Calu3 (cell line): ENCODE measurements at regions of chr17 and their contacts with region 1.

Region 1: DNA sequence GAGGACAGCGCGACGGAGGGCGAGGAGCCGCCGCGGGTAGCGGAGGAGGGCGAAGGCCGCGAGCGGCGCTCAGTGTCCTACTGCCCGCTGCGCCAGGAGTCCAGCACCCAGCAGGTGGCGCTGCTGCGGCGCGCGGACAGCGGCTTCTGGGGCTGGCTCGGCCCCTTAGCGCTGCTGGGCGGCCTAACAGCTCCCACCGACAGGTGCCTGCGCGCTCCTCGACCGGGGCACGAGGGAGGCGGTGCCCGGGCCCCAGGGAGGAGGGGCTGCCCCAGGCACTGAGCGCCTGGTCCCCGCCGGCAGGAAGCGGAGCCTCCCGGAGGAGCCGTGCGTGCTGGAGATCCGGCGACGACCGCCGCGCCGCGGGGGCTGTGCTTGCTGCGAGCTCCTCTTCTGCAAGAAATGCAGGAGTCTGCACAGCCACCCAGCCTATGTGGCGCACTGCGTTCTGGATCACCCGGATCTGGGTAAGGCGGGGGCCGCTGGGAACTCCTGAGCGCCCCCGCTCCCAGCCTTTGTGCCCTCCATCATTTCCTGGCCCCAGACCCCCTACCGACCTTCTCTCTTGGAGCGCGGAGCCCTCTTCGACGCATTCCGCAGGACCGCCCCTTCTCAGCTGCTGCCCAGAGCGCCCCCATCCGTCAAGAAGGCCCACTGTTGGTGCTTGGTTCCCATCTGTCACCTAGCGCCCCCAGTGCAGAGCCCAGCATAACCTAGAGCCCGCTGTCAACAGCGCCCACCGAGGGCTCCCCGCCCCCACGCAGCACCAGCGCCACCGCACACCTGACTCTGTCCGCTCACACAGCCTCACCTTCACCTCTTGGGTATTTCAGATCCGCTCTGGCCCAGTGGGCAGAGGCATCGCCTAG is 3.7 kb downstream of the C17orf50 start:
- DNase-seq: peak; percentile 96
- H3K4me3 Mint-ChIP-seq: peak overlapping the region; percentile 93
- H3K27ac Mint-ChIP-seq: no peak overlapping the region
- H3K4me1 Mint-ChIP-seq: peaks cover 10% of the 10 kb centered on the region
- H3K27me3 Mint-ChIP-seq: peaks cover 42% of the 10 kb centered on the region
- CTCF ChIP-seq: peak; percentile 90

Region 2: DNA sequence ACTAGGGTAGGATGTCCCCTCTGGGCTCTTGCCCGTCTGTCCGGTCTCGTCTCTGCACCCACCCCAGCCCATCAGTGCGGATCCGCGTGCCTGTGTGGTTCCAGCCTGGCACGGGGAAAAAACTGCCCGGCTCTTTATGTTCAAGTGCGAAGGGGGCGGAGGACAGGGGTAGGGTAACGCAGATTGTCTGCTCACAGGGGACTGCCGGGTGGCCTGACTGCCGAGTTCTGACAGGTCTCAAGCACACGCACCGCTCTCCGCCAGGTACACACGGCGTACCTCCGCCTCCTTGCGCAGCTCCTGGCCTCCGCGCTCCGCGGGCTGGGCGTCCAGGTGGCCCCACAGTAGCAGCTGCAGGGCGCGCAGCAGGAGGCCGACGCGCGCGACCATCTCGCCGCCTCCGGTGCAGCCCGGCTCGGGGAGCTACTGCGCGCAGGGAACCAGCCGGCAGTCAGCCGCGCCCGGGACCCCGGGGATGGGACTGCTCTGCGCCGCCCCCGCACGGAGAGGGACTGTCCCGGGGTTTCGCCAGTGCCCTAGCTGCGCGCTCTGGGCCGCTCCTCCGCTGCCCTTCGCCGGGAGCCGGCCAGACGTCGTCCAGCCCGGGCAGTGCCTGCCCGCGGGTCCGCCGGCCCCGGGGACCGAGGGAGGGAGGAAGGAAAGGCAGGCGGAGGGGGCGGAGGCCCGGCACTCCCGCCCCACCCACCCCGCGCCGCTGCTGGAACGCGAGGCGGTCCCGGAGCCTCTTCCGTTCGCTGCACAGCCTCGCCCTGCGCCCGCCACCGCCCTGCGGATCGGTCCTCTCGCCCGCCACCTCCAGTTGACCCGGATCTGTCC is 30.8 kb after region 1 on chr17 and contains the start of gene MMP28:
- CTCF ChIA-PET with region 1: interaction called, 20 read pairs
- intact Hi-C with region 1: no loop called
- DNase-seq: peak; percentile 49
- H3K4me3 Mint-ChIP-seq: peak within 1 kb of the TSS; percentile 74
- H3K27ac Mint-ChIP-seq: no peak within 1 kb of the TSS
- H3K4me1 Mint-ChIP-seq: no peaks in the 10 kb centered on the region
- H3K27me3 Mint-ChIP-seq: peaks cover 87% of the 10 kb centered on the region
- CTCF ChIP-seq: no peak
- total RNA-seq, gene MMP28: not detected in 2 replicates

Region 3: DNA sequence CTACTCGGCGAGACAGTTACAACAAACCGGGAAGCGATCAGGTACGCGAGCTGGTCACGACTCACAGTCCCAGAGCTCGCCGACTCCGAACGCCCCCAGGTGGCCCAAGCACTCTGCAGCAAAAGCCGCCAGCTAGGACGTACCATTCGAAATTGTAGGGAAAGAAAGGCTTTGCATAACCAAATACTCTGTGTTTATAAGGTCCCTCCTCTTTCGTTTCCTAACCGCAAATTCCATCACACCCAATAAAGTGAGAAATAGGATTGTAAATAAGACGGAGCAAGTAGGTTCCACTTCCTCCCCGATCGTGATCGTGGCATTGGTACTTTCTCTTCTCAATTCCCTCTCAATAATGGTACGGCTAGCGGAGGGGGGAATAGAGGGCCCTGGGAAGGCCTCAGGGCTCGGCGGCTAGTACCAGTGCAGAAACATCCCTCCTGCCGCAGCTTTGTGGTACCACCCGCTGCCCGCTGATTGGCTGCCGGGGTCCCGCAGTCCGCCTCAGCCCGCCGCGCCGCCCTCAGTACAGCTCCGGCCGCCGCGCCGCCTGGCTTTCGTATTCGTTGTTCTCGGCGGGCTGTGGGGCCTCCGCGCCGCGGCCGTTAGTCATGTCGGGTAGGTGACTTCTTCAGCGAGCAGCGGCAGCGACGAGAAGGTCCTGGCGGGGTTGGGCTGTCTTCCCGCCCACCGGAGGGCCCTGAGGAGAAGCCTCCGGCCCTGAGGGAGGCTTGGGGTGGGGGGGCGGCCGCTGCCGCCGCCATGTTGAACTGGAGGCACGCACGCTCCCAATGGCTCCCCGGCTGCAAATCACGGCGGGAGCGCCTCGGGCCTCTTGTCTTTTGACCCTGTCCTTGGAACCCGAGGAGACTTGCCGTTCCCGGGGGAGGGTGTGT is 44.9 kb after region 1 on chr17 and contains the start of gene TAF15:
- CTCF ChIA-PET with region 1: interaction called, 41 read pairs
- intact Hi-C with region 1: loop called (anchors 1 kb)
- DNase-seq: peak; percentile 97
- H3K4me3 Mint-ChIP-seq: peak within 1 kb of the TSS; percentile 92
- H3K27ac Mint-ChIP-seq: peak within 1 kb of the TSS; percentile 100
- H3K4me1 Mint-ChIP-seq: peaks cover 38% of the 10 kb centered on the region
- H3K27me3 Mint-ChIP-seq: no peaks in the 10 kb centered on the region
- CTCF ChIP-seq: peak; percentile 63
- total RNA-seq, gene TAF15: 284 and 286 TPM in 2 replicates